ENCODE measurements at regions of chr19 and their contacts with region 1.

Region 1: GRCh38 chr19:28067882-28068281 is 1145.1 kb downstream of the UQCRFS1 start:
- DNase-seq: no peak

Region 2: DNA sequence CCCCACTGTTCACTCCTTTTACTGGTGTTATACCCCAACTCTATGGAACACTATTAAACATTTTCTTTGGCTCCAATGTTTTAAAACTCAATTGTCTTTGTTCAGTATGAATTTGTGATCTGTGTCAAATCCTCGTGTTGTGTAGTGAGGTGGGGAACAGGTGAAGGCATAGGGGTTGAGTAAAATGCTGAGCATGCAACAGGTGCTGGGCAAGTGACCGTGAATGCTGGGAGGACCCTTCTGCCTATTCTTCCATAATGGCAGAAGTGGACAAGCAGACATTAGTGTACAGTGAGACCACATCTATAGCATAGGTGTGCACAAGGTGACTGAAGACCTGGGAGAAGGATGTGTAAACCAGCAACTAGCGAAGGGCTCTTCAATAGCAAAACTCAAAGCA is 43.0 kb before region 1 on chr19:
- intact Hi-C with region 1: loop called in 1 of 2 experiments (anchors 1 kb)
- DNase-seq: no peak

Measured in posterior vena cava (tissue), 2 donors.